ENCODE measurements at regions of chr5 and their contacts with region 1.

Region 1: GRCh38 chr5:122690266-122690665 is 84.6 kb upstream of the SNX2 start:
- DNase-seq: no peak
- ATAC-seq: no peak
- H3K4me3 ChIP-seq: no peak overlapping the region
- H3K4me3 Mint-ChIP-seq: no peak overlapping the region
- H3K27ac ChIP-seq: no peak overlapping the region
- H3K27ac Mint-ChIP-seq: no peak overlapping the region
- H3K4me1 ChIP-seq: peaks cover 19 to 21% of the 10 kb centered on the region in 2 donors
- H3K4me1 Mint-ChIP-seq: peaks cover 36% of the 10 kb centered on the region
- H3K27me3 ChIP-seq: no peaks in the 10 kb centered on the region
- H3K27me3 Mint-ChIP-seq: no peaks in the 10 kb centered on the region
- CTCF ChIP-seq: no peak

Region 2: GRCh38 chr5:122674385-122674784 is 15.9 kb before region 1 on chr5:
- CTCF ChIA-PET with region 1: no interaction called
- POLR2A ChIA-PET with region 1: no interaction called
- intact Hi-C with region 1: loop called (anchors 2 kb)
- DNase-seq: no peak
- ATAC-seq: no peak
- H3K4me3 ChIP-seq: no peak overlapping the region
- H3K4me3 Mint-ChIP-seq: no peak overlapping the region
- H3K27ac ChIP-seq: no peak overlapping the region
- H3K27ac Mint-ChIP-seq: no peak overlapping the region
- H3K4me1 ChIP-seq: peaks cover 0 to 9% of the 10 kb centered on the region in 2 donors
- H3K4me1 Mint-ChIP-seq: peaks cover 8% of the 10 kb centered on the region
- H3K27me3 ChIP-seq: no peaks in the 10 kb centered on the region
- H3K27me3 Mint-ChIP-seq: no peaks in the 10 kb centered on the region
- CTCF ChIP-seq: no peak

Measured in B cell (primary cell).